Activated T-helper 1 cell treated with anti-CD3 and anti-CD28 coated beads, Interleukin-12 subunit alpha, Interleukin-12 subunit beta, Interleukin-2, Interleukin-4 antibody, amounts not matched to agents 30 ng/mL and 10 ng/mL and 1 ng/mL, durations not matched to agents 14 hours and 24 hours and 36 hours (primary cell): ENCODE measurements at regions of chr11 and their contacts with region 1.

Region 1: DNA sequence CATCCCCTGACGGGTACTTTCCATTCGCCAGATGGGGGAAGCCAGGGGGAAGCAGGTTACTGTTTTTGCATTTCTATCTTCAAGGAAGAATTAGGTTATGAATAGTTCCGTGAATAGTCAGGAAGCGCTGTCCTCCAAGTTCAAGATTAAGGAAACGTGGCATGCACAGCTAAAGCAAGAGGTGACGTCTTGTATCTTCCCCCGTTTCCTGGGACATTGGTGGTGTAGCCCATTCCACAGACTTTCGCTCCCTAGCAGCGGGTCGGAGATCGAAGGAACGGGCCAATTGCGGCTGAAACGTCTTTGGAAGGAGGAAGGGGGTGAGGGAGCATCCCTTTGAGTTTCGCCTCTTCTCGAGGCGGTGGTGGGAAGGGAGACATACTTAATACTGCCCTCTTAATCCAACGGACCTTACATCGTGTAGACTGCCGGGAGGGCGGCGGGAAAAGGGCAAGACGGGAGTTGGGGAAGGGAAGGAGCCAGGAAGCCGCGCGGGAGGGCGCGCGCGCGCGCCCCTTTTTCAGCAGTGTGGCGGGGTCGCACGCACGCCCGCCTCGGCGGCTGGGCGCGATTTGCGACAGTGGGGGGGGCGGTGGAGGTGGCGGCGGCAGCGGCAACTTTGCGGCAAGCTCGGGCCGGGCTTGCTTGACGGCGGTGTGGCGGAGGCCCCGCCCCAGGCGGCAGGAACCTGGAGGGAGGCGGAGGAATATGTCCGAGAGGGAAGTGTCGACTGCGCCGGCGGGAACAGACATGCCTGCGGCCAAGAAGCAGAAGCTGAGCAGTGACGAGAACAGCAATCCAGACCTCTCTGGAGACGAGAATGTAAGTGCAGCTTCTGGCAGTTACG is at the start of gene EED:
- DNase-seq: peak; percentile 93
- H3K4me3 Mint-ChIP-seq: no peak within 1 kb of the TSS
- H3K27ac Mint-ChIP-seq: no peak within 1 kb of the TSS
- H3K4me1 Mint-ChIP-seq: peaks cover 43% of the 10 kb centered on the region
- H3K27me3 Mint-ChIP-seq: no peaks in the 10 kb centered on the region
- total RNA-seq, gene EED: 279 and 294 TPM in 2 replicates

Region 2: DNA sequence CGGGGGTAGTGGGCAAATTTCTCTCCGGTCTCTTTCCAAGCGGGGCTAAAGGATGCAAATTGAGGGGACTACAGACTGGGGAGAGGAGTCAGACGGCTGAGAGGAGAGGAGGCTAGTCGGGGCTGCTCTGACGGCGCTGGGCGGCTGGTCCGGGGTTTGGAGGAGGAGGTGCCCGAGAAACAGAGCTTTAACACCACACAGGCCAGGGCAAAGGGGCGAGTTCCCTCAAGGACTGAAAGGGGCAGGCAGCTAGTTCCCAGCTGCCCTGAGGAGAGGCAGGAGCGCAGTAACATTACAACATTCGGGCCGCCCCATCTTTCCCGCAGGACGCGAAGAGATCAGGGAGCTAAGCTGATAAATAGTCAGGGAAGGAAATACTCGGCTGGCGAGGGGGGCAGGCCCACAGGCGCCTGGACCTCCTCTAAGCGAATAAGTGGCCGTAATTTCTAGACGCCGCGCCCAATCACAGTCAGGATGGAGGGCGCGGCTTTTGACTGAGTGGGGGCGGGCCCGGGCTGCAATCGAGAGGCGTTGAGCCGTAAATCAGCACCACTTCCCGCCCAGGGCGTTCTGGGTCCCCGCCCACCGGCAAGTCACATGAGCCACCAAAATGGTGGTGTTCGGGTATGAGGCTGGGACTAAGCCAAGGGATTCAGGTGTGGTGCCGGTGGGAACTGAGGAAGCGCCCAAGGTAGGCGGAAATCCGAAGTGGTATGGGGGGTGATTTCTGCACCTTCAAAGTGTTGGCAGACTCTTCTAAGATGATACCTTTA is 616.6 kb before region 1 on chr11 and contains the start of gene TMEM126B:
- intact Hi-C with region 1: loop called (anchors 1 kb)
- DNase-seq: peak; percentile 96
- H3K4me3 Mint-ChIP-seq: peak within 1 kb of the TSS; percentile 97
- H3K27ac Mint-ChIP-seq: peak within 1 kb of the TSS; percentile 94
- H3K4me1 Mint-ChIP-seq: peaks cover 52% of the 10 kb centered on the region
- H3K27me3 Mint-ChIP-seq: peaks cover 6% of the 10 kb centered on the region
- total RNA-seq, gene TMEM126B: 52.5 and 57.2 TPM in 2 replicates

Region 3: GRCh38 chr11:86041975-86042378 is 202.8 kb before region 1 on chr11:
- intact Hi-C with region 1: loop called (anchors 1 kb)
- DNase-seq: peak; percentile 48
- H3K4me3 Mint-ChIP-seq: peak overlapping the region; percentile 43
- H3K27ac Mint-ChIP-seq: peak overlapping the region; percentile 71
- H3K4me1 Mint-ChIP-seq: peaks cover 63% of the 10 kb centered on the region
- H3K27me3 Mint-ChIP-seq: no peaks in the 10 kb centered on the region

Region 4: DNA sequence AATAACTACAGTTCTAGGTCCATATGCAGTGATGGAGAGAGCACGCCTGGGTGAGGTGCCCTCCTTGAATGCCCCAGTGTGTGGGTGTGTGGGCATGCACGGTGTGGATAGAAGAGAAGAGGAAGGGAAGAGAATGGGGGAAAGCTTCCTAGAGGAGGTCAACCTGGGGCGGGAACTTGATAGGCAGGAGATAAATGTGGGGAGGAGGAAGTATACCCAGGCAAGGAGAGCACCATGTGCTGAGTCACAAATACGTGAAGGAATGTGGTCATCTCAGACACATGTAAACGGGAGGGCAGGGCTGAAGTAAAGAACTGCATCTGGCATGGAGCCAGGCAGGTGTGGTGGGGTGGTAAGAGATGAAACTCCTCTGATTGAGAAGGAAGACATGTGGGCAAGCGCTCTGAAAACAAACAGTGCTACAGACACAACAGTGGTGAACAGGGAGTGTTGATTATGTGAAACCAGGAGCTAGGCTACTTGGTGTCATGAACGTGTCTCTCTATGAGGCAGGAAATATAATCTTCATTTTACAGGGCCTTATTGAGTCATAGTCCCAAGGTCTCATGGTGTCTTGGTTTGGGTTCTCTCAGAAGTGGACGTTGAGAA is 61.7 kb before region 1 on chr11:
- intact Hi-C with region 1: loop called (anchors 2 kb)
- DNase-seq: peak; percentile 30
- H3K4me3 Mint-ChIP-seq: no peak overlapping the region
- H3K27ac Mint-ChIP-seq: no peak overlapping the region
- H3K4me1 Mint-ChIP-seq: peaks cover 9% of the 10 kb centered on the region
- H3K27me3 Mint-ChIP-seq: no peaks in the 10 kb centered on the region

Region 5: GRCh38 chr11:86230921-86231430 is 13.8 kb before region 1 on chr11:
- intact Hi-C with region 1: loop called (anchors 1 kb)
- DNase-seq: no peak
- H3K4me3 Mint-ChIP-seq: no peak overlapping the region
- H3K27ac Mint-ChIP-seq: peak overlapping the region; percentile 47
- H3K4me1 Mint-ChIP-seq: peaks cover 68% of the 10 kb centered on the region
- H3K27me3 Mint-ChIP-seq: no peaks in the 10 kb centered on the region

Region 6: DNA sequence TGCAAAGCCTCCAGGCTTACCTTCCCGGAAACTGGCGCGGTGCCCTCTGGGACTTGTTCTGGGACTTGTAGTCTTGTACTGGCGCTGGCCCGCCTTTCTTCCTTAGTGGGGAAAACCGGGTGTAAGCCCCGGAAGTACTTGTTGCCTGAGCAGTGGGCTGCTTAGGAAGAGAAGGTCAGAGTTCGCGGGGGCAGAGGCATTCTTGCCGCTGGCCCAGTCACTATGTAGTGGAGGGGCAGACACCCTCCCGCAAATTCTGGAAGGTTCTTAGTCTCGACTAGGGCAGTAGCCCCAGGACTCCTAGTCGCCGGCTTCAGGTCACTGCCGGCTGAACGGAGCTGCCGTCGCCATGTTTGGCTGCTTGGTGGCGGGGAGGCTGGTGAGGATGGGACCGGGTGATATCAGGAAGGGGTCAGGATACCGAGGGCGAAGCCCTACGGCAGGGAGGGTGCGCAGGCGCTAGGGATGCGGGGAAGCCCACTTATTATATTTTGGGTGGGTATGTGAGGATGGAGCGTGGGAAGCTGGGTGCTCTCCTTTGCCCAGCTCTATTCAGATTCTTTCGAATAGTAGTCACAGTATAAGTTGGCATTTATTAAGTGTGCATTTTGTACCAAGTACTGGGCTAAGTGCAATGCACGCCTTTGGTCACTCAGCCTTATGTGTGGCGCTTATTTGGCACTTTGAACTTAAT is 57.5 kb after region 1 on chr11 and contains the start of gene HIKESHI:
- intact Hi-C with region 1: loop called (anchors 1 kb)
- DNase-seq: peak; percentile 83
- H3K4me3 Mint-ChIP-seq: peak within 1 kb of the TSS; percentile 100
- H3K27ac Mint-ChIP-seq: peak within 1 kb of the TSS; percentile 97
- H3K4me1 Mint-ChIP-seq: peaks cover 28% of the 10 kb centered on the region
- H3K27me3 Mint-ChIP-seq: no peaks in the 10 kb centered on the region
- total RNA-seq, gene HIKESHI: 54.2 and 56.4 TPM in 2 replicates